PC-9 (cell line): ENCODE measurements at regions of chr3 and their contacts with region 1.

Region 1: DNA sequence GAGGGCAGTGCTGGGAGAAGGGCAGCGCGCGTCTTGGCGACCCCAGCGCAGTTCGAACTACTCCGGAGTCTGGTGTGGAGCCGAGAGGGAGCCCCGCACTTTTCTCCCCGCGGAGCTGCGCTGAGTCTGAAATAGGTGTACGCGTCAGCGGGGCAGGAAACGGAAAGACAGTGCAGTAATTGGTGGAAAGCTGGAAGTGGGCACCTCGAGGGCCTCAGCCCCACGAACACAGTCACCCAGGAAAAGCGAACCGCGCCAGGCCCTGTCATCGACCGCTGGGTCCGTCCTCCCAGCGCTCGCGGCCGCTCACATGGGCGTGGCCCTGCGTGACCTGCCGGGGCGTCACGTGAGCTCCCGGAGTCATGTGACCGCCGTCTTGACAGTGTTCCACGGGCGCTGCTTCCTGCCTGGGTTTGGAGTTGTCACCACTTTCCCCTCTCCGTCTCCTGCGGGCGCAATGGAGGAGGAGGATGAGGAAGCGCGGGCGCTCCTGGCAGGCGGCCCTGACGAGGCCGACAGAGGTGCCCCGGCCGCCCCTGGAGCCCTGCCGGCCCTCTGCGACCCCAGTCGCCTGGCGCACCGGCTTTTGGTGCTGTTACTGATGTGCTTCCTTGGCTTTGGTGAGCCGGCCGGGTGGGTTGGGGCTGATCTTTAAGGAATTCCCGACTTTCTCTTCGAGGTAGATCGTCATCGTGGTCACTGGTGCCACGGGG is at the start of gene MFSD1:
- DNase-seq: peak; percentile 83 to 92
- H3K4me3 ChIP-seq: peak within 1 kb of the TSS; percentile 82
- H3K27ac ChIP-seq: peak within 1 kb of the TSS; percentile 43; the same call in 1 of the 2 replicates
- H3K4me1 ChIP-seq: peaks cover 35% of the 10 kb centered on the region
- H3K27me3 ChIP-seq: no peaks in the 10 kb centered on the region
- CTCF ChIP-seq: no peak
- total RNA-seq, gene MFSD1: 31.0 and 38.6 TPM in 2 replicates

Region 2: DNA sequence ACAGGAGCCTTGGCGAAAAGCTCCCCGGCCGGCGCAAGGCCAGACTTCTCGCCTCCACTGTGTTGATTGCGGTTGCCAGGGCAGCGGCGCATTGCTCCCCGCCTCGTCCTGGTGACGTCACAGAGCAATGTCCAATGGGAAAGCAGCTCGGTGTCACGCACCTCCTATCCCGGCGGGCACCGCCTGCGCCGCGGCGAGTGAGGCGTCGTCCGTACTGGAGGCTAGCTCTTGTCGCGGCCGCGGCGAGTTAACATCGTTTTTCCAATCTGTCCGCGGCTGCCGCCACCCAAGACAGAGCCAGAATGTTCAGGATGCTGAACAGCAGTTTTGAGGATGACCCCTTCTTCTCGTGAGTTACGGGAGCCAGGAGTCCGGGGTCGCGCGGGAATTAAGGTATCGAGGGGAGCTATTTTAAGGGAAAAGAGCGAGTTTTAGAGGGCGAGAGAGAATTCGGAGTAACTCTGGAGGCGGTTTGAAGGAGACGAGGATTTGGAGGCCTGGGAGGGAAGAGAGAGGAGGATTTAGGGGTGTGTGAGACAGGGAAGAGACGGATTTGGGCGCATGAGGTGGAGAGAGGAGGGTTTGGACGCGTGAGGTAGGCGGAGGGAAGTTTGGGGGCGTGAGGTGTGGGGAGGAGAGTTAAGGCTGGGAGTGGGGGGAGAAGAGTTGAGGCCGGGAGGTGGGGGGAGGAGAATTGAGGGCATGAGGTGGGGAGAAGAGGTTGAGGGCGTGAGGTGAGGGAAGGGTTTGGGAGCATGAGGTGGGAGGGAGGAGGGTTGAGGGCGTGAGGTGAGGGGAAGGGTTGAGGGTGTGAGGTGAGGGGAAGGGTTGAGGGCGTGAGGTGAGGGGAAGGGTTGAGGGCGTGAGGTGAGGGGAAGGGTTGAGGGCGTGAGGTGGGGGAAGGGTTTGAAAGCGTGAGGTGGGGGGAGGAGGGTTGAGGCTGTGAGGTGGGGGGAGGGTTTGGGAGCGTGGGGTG is 230.6 kb before region 1 on chr3 and contains the start of gene MLF1:
- CTCF ChIA-PET with region 1: no interaction called
- POLR2A ChIA-PET with region 1: interaction called, 4 read pairs
- intact Hi-C with region 1: loop called (anchors 2 kb)
- DNase-seq: peak; percentile 90 to 98
- H3K4me3 ChIP-seq: peak within 1 kb of the TSS; percentile 94
- H3K27ac ChIP-seq: peak within 1 kb of the TSS; percentile 52
- H3K4me1 ChIP-seq: peaks cover 5% of the 10 kb centered on the region; the same call in 1 of the 2 replicates
- H3K27me3 ChIP-seq: no peaks in the 10 kb centered on the region
- CTCF ChIP-seq: no peak
- total RNA-seq, gene MLF1: 52.3 and 55.5 TPM in 2 replicates

Region 3: GRCh38 chr3:158773845-158774830 is 27.7 kb before region 1 on chr3:
- CTCF ChIA-PET with region 1: no interaction called
- POLR2A ChIA-PET with region 1: no interaction called
- intact Hi-C with region 1: no loop called
- DNase-seq: peak in 1 of 2 experiments; percentile 73
- H3K4me3 ChIP-seq: no peak overlapping the region
- H3K27ac ChIP-seq: peak overlapping the region; percentile 98
- H3K4me1 ChIP-seq: peaks cover 69% of the 10 kb centered on the region
- H3K27me3 ChIP-seq: no peaks in the 10 kb centered on the region
- CTCF ChIP-seq: 0 out of 2 replicates have a peak, but pooled peaks have one; percentile 18